ENCODE measurements at regions of chr1 and their contacts with region 1.

Region 1: GRCh38 chr1:203625628-203626019 is 1.0 kb upstream of the ATP2B4 start:
- DNase-seq: peak; percentile 84 to 91 (median 85)
- H3K4me3 ChIP-seq: peak overlapping the region; percentile 82 to 100
- H3K4me3 Mint-ChIP-seq: peak overlapping the region; percentile 95 to 100 (median 98)
- H3K27ac ChIP-seq: peak overlapping the region; percentile 84
- H3K27ac Mint-ChIP-seq: peak overlapping the region; percentile 83 to 97 (median 96)
- H3K4me1 ChIP-seq: peaks cover 32% of the 10 kb centered on the region
- H3K4me1 Mint-ChIP-seq: peaks cover 18 to 56% (median 24%) of the 10 kb centered on the region in 4 donors
- H3K27me3 ChIP-seq: no peaks in the 10 kb centered on the region
- H3K27me3 Mint-ChIP-seq: no peaks in the 10 kb centered on the region

Region 2: GRCh38 chr1:203304919-203305808 is 320.5 kb before region 1 on chr1 and contains the start of gene BTG2:
- CTCF ChIA-PET with region 1: no interaction called
- POLR2A ChIA-PET with region 1: interaction called, 10 read pairs
- intact Hi-C with region 1: no loop called
- DNase-seq: peak; percentile 90 to 94 (median 91)
- H3K4me3 ChIP-seq: peak within 1 kb of the TSS; percentile 87 to 95
- H3K4me3 Mint-ChIP-seq: peak within 1 kb of the TSS; percentile 90 to 99 (median 98)
- H3K27ac ChIP-seq: peak within 1 kb of the TSS; percentile 100
- H3K27ac Mint-ChIP-seq: peak within 1 kb of the TSS; percentile 97 to 100 (median 99)
- H3K4me1 ChIP-seq: peaks cover 50% of the 10 kb centered on the region
- H3K4me1 Mint-ChIP-seq: peaks cover 48 to 82% (median 57%) of the 10 kb centered on the region in 4 donors
- H3K27me3 ChIP-seq: no peaks in the 10 kb centered on the region
- H3K27me3 Mint-ChIP-seq: no peaks in the 10 kb centered on the region
- total RNA-seq, gene BTG2: 197 to 201 TPM

Region 3: GRCh38 chr1:203603940-203604591 is 21.6 kb before region 1 on chr1:
- CTCF ChIA-PET with region 1: interaction called, 44 read pairs
- POLR2A ChIA-PET with region 1: interaction called, 120 read pairs
- intact Hi-C with region 1: loop called (anchors 1 kb)
- DNase-seq: no peak
- H3K4me3 ChIP-seq: no peak overlapping the region
- H3K4me3 Mint-ChIP-seq: peak overlapping the region in 1 of 8 donors; percentile 37
- H3K27ac ChIP-seq: no peak overlapping the region
- H3K27ac Mint-ChIP-seq: peak overlapping the region in 5 of 7 donors; percentile 23 to 69 (median 61)
- H3K4me1 ChIP-seq: peaks cover 49% of the 10 kb centered on the region
- H3K4me1 Mint-ChIP-seq: peaks cover 33 to 55% (median 42%) of the 10 kb centered on the region in 4 donors
- H3K27me3 ChIP-seq: no peaks in the 10 kb centered on the region
- H3K27me3 Mint-ChIP-seq: no peaks in the 10 kb centered on the region

Region 4: GRCh38 chr1:203655671-203656070 is 30.0 kb after region 1 on chr1:
- CTCF ChIA-PET with region 1: interaction called, 37 read pairs
- POLR2A ChIA-PET with region 1: interaction called, 240 read pairs
- intact Hi-C with region 1: loop called (anchors 1 kb)
- DNase-seq: peak in 4 of 5 donors; percentile 28 to 52 (median 38)
- H3K4me3 ChIP-seq: no peak overlapping the region
- H3K4me3 Mint-ChIP-seq: peak overlapping the region; percentile 27 to 78 (median 71)
- H3K27ac ChIP-seq: peak overlapping the region; percentile 36
- H3K27ac Mint-ChIP-seq: peak overlapping the region; percentile 80 to 96 (median 92)
- H3K4me1 ChIP-seq: peaks cover 69% of the 10 kb centered on the region
- H3K4me1 Mint-ChIP-seq: peaks cover 45 to 77% (median 61%) of the 10 kb centered on the region in 4 donors
- H3K27me3 ChIP-seq: no peaks in the 10 kb centered on the region
- H3K27me3 Mint-ChIP-seq: no peaks in the 10 kb centered on the region

Region 5: GRCh38 chr1:203692565-203693470 is 67.2 kb after region 1 on chr1:
- CTCF ChIA-PET with region 1: interaction called, 50 read pairs
- POLR2A ChIA-PET with region 1: interaction called, 89 read pairs
- intact Hi-C with region 1: no loop called
- DNase-seq: no peak
- H3K4me3 ChIP-seq: no peak overlapping the region
- H3K4me3 Mint-ChIP-seq: peak overlapping the region in 7 of 8 donors; percentile 18 to 78 (median 46)
- H3K27ac ChIP-seq: peak overlapping the region; percentile 42
- H3K27ac Mint-ChIP-seq: peak overlapping the region; percentile 85 to 97 (median 91)
- H3K4me1 ChIP-seq: peaks cover 64% of the 10 kb centered on the region
- H3K4me1 Mint-ChIP-seq: peaks cover 49 to 88% (median 64%) of the 10 kb centered on the region in 4 donors
- H3K27me3 ChIP-seq: no peaks in the 10 kb centered on the region
- H3K27me3 Mint-ChIP-seq: no peaks in the 10 kb centered on the region

Region 6: GRCh38 chr1:203823306-203823705 is 197.7 kb after region 1 on chr1:
- CTCF ChIA-PET with region 1: no interaction called
- POLR2A ChIA-PET with region 1: no interaction called
- intact Hi-C with region 1: loop called (anchors 10 kb)
- DNase-seq: no peak
- H3K4me3 ChIP-seq: no peak overlapping the region
- H3K4me3 Mint-ChIP-seq: no peak overlapping the region
- H3K27ac ChIP-seq: no peak overlapping the region
- H3K27ac Mint-ChIP-seq: peak overlapping the region in 1 of 7 donors; percentile 29
- H3K4me1 ChIP-seq: no peaks in the 10 kb centered on the region
- H3K4me1 Mint-ChIP-seq: peaks cover 22 to 32% (median 27%) of the 10 kb centered on the region in 4 donors
- H3K27me3 ChIP-seq: no peaks in the 10 kb centered on the region
- H3K27me3 Mint-ChIP-seq: no peaks in the 10 kb centered on the region